ENCODE measurements at regions of chr6 and their contacts with region 1.

Region 1: GRCh38 chr6:21084656-21085055 is 508.9 kb upstream of the SOX4 start:
- DNase-seq: no peak
- ATAC-seq: no peak
- H3K4me3 ChIP-seq: no peak overlapping the region
- H3K27ac ChIP-seq: no peak overlapping the region
- H3K4me1 ChIP-seq: no peaks in the 10 kb centered on the region
- H3K27me3 ChIP-seq: no peaks in the 10 kb centered on the region
- CTCF ChIP-seq: no peak
- POLR2A ChIP-seq: no peak
- RAD21 ChIP-seq: no peak

Region 2: GRCh38 chr6:21176197-21176596 is 91.5 kb after region 1 on chr6:
- CTCF ChIA-PET with region 1: no interaction called
- POLR2A ChIA-PET with region 1: no interaction called
- dilution Hi-C with region 1: no loop called
- in situ Hi-C with region 1: no loop called
- intact Hi-C with region 1: loop called (anchors 5 kb)
- DNase-seq: no peak
- ATAC-seq: no peak
- H3K4me3 ChIP-seq: no peak overlapping the region
- H3K27ac ChIP-seq: no peak overlapping the region
- H3K4me1 ChIP-seq: no peaks in the 10 kb centered on the region; the same call in 1 of the 2 replicates
- H3K27me3 ChIP-seq: no peaks in the 10 kb centered on the region
- CTCF ChIP-seq: no peak
- POLR2A ChIP-seq: no peak
- RAD21 ChIP-seq: no peak